Activated T-helper 2 cell treated with anti-CD3 and anti-CD28 coated beads, Interferon-gamma antibody, Interleukin-2, Interleukin-4, amounts not matched to agents 10 μg/mL and 5 μg/mL and 100 μg/mL, durations not matched to agents 14 hours and 24 hours and 36 hours (primary cell): ENCODE measurements at regions of chr18 and their contacts with region 1.

Region 1: GRCh38 chr18:13375302-13376255 is 157.0 kb downstream of the LDLRAD4 start:
- DNase-seq: peak; percentile 77
- H3K4me3 Mint-ChIP-seq: peak overlapping the region; percentile 53
- H3K27ac Mint-ChIP-seq: peak overlapping the region; percentile 93
- H3K4me1 Mint-ChIP-seq: peaks cover 70% of the 10 kb centered on the region
- H3K27me3 Mint-ChIP-seq: no peaks in the 10 kb centered on the region

Region 2: GRCh38 chr18:12947355-12948041 is 428.1 kb before region 1 on chr18 and contains the start of gene SEH1L:
- intact Hi-C with region 1: loop called (anchors 5 kb)
- DNase-seq: peak; percentile 96
- H3K4me3 Mint-ChIP-seq: peak within 1 kb of the TSS; percentile 98
- H3K27ac Mint-ChIP-seq: peak within 1 kb of the TSS; percentile 99
- H3K4me1 Mint-ChIP-seq: peaks cover 29% of the 10 kb centered on the region
- H3K27me3 Mint-ChIP-seq: no peaks in the 10 kb centered on the region
- total RNA-seq, gene SEH1L: 112 and 115 TPM in 2 replicates

Region 3: DNA sequence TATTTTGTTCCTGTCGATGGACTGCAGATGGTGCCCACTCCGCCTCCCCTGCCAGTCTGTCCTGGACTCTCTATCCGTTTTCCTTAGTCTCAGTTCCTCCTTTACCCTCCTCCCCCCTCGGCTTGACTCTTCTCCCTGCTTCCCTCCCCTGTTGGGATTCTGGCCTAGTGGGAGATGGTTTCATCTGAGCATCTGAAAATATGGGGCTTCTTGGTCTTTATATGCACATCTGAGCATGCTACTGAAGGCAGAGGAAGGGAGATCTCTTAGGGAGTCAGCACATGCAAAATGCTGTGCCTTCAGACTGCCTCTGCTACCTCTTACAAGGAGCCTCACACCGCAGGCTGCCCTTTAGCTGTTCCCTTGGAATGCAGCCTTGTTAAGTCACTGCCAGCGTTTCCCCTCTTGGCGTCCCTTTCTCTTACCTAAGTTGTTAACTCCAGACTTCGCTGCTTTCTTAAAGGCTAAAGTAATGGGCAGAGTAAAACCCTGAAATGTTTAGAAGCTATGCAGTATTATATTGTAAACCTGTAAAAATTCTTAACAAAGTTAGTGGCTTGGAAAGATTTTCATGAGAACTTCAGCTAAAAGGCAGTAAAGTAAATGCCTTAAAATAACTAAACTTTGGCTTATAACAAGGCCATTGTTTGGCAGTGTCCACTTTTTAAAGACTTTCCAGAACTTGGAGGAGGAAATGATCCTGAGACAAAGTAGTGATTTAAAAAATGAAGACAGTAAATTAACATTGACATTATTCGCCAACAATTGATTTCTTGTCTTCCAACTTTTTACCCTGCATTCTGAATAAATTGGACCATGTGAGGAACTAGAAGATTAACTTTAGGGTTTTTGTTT is 107.2 kb before region 1 on chr18:
- intact Hi-C with region 1: loop called (anchors 1 kb)
- DNase-seq: no peak
- H3K4me3 Mint-ChIP-seq: peak overlapping the region; percentile 47
- H3K27ac Mint-ChIP-seq: peak overlapping the region; percentile 84
- H3K4me1 Mint-ChIP-seq: peaks cover 63% of the 10 kb centered on the region
- H3K27me3 Mint-ChIP-seq: no peaks in the 10 kb centered on the region

Region 4: GRCh38 chr18:13435596-13436327 is 60.2 kb after region 1 on chr18:
- intact Hi-C with region 1: loop called (anchors 1 kb)
- DNase-seq: no peak
- H3K4me3 Mint-ChIP-seq: no peak overlapping the region
- H3K27ac Mint-ChIP-seq: peak overlapping the region; percentile 54
- H3K4me1 Mint-ChIP-seq: peaks cover 56% of the 10 kb centered on the region
- H3K27me3 Mint-ChIP-seq: no peaks in the 10 kb centered on the region

Region 5: GRCh38 chr18:13577091-13577697 is 201.6 kb after region 1 on chr18:
- intact Hi-C with region 1: loop called (anchors 5 kb)
- DNase-seq: peak; percentile 48
- H3K4me3 Mint-ChIP-seq: peak overlapping the region; percentile 61
- H3K27ac Mint-ChIP-seq: peak overlapping the region; percentile 82
- H3K4me1 Mint-ChIP-seq: peaks cover 45% of the 10 kb centered on the region
- H3K27me3 Mint-ChIP-seq: no peaks in the 10 kb centered on the region

Region 6: GRCh38 chr18:14026199-14026598 is 650.6 kb after region 1 on chr18:
- intact Hi-C with region 1: no loop called
- DNase-seq: no peak
- H3K4me3 Mint-ChIP-seq: no peak overlapping the region
- H3K27ac Mint-ChIP-seq: no peak overlapping the region
- H3K4me1 Mint-ChIP-seq: no peaks in the 10 kb centered on the region
- H3K27me3 Mint-ChIP-seq: peaks cover 6% of the 10 kb centered on the region